ENCODE measurements at regions of chr22 and their contacts with region 1.

Region 1: GRCh38 chr22:28019881-28020871 is 101.1 kb upstream of the PITPNB start:
- DNase-seq: peak; percentile 87
- H3K4me3 ChIP-seq: no peak overlapping the region
- H3K27ac ChIP-seq: no peak overlapping the region
- H3K4me1 ChIP-seq: peaks cover 10% of the 10 kb centered on the region
- H3K27me3 ChIP-seq: no peaks in the 10 kb centered on the region
- CTCF ChIP-seq: peak; percentile 91 to 93 (median 91)
- POLR2A ChIP-seq: no peak

Region 2: GRCh38 chr22:27919222-27919941 is 100.8 kb before region 1 on chr22 and contains the start of gene PITPNB:
- intact Hi-C with region 1: no loop called
- DNase-seq: peak; percentile 95
- H3K4me3 ChIP-seq: peak within 1 kb of the TSS; percentile 95 to 97
- H3K27ac ChIP-seq: peak within 1 kb of the TSS; percentile 99
- H3K4me1 ChIP-seq: peaks cover 16% of the 10 kb centered on the region
- H3K27me3 ChIP-seq: no peaks in the 10 kb centered on the region
- CTCF ChIP-seq: peak in 1 of 3 experiments; percentile 12
- POLR2A ChIP-seq: peak; percentile 53
- total RNA-seq, gene PITPNB: 39.9 to 49.4 TPM

Region 3: GRCh38 chr22:27952779-27953178 is 67.4 kb before region 1 on chr22:
- intact Hi-C with region 1: no loop called
- DNase-seq: no peak
- H3K4me3 ChIP-seq: no peak overlapping the region
- H3K27ac ChIP-seq: no peak overlapping the region
- H3K4me1 ChIP-seq: no peaks in the 10 kb centered on the region
- H3K27me3 ChIP-seq: no peaks in the 10 kb centered on the region
- CTCF ChIP-seq: no peak
- POLR2A ChIP-seq: no peak

Region 4: DNA sequence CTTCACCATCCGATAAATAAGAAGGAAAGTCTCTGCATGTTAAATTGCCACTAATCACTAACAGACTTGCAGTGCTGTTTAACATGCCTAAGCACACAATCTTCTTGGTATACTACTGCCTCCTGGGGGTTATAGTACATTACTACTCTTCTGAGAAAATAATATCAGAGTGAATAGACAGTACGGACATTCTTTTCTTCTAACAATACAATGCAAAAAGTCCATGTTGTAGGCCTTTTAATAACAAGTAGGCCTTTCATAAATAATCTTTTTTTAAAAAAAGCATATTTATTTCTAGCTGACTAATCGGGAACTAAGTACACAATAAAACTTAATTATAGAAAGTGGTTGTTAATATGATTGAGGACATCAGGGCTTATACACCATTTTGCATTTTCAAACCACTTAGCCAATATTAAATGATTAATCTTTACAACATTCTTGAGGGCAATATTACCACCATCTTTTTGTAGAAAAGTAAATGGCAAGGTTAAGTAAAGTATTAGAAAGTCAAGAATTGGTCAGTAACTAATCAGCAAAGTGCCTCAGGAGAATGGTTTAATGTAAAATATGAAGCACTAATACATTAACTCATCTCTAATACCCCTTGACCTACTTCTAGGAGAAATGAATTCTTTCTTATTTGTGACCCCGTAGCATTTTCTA is 574.8 kb after region 1 on chr22:
- intact Hi-C with region 1: loop called (anchors 5 kb)
- DNase-seq: no peak
- H3K4me3 ChIP-seq: no peak overlapping the region
- H3K27ac ChIP-seq: no peak overlapping the region
- H3K4me1 ChIP-seq: no peaks in the 10 kb centered on the region
- H3K27me3 ChIP-seq: no peaks in the 10 kb centered on the region
- CTCF ChIP-seq: peak; percentile 57 to 71 (median 63)
- POLR2A ChIP-seq: no peak

Measured in testis (tissue), 5 donors.